ENCODE measurements at regions of chr4 and their contacts with region 1.

Region 1: GRCh38 chr4:52983563-52984303 is 121.6 kb downstream of the RASL11B start:
- DNase-seq: no peak

Region 2: DNA sequence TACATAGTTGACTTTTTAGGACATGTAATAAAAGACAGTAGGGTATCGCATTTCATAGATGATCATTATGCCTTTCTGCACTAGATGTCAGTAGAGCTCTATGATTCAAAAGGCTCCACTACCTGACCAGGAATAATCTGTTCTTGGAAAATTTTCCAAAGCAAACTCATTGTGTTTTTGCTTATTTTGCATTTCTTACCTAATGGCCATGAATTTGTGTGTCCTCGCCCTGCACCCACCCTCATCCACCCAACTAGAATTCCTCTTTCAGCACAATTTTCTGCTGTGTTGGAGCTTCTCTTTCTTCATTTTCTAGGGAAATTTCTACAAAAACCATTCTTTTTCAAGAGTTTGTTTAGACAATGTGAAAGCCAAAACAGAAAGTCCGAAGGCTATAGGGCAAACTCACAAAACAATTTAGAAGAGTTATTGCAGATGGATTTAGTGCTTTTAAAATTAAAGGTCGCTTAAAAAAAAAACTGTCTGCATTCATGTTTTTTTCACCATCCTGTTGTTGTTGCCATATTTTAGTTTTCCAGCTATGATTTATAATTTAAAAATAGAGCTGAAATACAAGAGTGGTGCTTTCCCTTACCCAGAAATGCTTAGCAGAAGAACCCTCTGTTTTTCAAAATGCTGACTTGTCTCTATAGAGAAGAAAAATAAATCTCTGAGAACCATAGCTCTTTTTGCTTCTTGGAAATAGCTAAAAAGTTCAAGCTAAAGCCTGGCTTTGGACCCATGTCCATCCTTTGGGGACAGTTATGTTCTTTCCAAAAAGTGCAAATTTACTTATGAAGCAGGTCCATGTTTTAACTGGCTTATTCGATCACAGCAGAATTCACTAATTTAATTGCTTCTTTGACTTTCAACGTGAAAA is 748.9 kb before region 1 on chr4:
- intact Hi-C with region 1: loop called (anchors 5 kb)
- DNase-seq: no peak

Region 3: GRCh38 chr4:52545099-52546069 is 438.3 kb before region 1 on chr4:
- intact Hi-C with region 1: loop called (anchors 2 kb)
- DNase-seq: peak; percentile 84

Region 4: DNA sequence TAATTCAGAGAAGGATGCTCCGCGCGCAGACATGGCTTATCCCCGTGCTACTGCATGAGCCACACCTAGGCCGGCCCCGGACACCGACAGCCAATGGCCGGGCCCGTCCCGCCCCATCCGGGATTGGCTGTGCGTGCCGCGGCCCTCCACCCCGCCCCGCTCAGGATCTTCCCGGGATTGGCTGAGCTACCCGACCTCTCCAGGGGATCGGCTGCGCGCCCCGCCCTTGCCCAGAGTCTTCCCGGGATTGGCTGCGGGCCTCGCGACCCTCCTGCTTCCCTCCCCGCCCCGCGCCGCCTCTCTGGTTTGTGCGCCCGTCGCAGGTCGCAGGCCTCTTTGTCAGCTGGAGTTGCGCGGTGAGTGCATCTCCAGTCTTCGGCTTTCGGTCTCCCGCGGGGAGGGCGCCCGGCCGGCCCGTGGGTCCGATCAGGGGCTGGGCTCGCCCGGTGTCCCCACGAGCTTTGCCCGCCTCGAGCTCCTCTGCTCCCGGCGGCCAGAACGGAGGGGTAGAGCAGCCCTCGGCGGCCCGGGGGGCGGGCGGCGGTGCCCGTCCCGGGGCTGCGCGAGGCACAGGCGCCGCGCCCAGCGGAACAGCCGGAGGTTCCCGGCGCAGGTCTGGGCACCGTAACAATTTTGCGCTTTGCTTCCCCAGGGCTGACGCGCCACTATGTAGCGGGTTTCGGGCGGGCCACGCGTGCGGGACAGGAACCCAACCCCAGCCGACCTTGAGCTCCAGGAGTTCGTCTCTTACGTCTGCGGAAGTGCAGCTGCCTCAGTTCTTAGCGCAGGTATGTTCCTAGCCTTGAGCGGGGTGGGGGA is 271.4 kb before region 1 on chr4:
- intact Hi-C with region 1: loop called (anchors 5 kb)
- DNase-seq: peak; percentile 98

Region 5: DNA sequence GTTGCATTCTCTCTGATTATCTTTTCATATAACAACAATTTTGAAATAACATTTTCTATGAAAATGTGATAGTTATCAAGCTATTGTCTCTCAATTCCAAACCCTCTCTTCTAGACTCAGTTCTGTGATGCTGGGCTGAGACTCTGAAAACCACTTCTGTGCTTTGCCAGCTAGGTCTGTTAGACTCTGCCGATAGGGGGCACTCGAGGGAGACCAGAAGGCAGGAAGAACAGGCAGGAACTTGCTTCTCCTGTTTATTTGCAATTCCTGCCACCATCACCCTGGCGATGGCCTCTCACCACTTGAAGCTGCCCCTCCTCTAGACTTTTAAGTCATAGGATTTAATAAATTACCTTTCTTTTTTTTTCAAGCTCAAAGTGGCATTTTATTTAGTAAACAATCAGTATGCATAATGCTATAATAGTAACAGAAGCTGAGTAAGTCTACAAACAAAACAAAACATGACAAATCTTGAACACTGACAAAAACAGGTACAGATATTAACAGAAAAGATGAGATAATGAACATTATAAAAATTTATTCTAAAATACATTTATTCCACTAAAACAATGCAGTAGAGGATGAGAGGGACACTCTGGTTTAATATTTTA is 71.9 kb before region 1 on chr4:
- intact Hi-C with region 1: loop called (anchors 5 kb)
- DNase-seq: no peak

Region 6: DNA sequence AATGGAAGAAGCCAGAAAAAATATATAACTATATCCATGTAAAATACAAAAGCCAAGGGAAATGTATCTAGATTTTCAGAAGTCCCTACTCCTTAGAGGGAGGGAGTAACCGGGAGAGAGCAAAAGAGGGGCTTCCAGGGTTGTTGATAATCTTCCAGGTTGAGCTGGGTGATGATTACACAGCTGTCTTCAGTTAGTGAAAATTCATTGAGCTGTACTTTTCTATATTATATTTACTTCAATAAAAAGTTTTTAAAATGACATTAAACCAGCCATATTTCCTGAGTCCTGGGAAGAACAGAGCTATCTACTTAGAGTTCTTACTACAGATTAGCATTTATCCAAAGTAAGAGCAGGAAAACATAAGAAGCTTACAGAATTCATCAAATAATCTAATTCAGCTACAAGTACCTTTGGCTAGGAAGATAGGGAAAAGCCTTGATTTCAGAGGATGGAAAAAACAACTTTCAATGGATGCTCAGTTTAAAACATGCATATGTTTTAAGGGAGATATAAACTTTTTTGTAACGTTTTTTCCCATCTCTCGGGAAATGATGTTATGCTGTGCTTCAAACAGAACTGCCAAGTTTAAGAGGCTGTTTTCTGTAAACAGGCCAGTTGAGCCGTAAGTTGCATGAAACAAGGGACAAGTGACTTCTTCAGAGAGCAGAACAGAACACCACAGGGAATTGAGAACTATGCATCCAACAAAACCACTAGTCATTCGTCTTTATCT is 177.5 kb after region 1 on chr4:
- intact Hi-C with region 1: no loop called
- DNase-seq: no peak